ENCODE measurements at regions of chr14 and their contacts with region 1.

Region 1: GRCh38 chr14:74612350-74613021 is 449 bp upstream of the LTBP2 start:
- DNase-seq: peak; percentile 69
- H3K4me3 ChIP-seq: peak overlapping the region; percentile 65
- H3K27ac ChIP-seq: peak overlapping the region; percentile 24
- H3K4me1 ChIP-seq: peaks cover 5% of the 10 kb centered on the region
- H3K27me3 ChIP-seq: peaks cover 16% of the 10 kb centered on the region
- CTCF ChIP-seq: peak; percentile 34

Region 2: GRCh38 chr14:74362361-74362915 is 250.0 kb before region 1 on chr14:
- intact Hi-C with region 1: loop called (anchors 2 kb)
- DNase-seq: peak; percentile 75
- H3K4me3 ChIP-seq: no peak overlapping the region
- H3K27ac ChIP-seq: no peak overlapping the region
- H3K4me1 ChIP-seq: no peaks in the 10 kb centered on the region
- H3K27me3 ChIP-seq: no peaks in the 10 kb centered on the region
- CTCF ChIP-seq: peak; percentile 88

Region 3: GRCh38 chr14:74501135-74501614 is 111.3 kb before region 1 on chr14:
- intact Hi-C with region 1: loop called (anchors 5 kb)
- DNase-seq: peak; percentile 32
- H3K4me3 ChIP-seq: no peak overlapping the region
- H3K27ac ChIP-seq: no peak overlapping the region
- H3K4me1 ChIP-seq: no peaks in the 10 kb centered on the region
- H3K27me3 ChIP-seq: no peaks in the 10 kb centered on the region
- CTCF ChIP-seq: peak; percentile 17

Region 4: GRCh38 chr14:74797495-74797894 is 185.0 kb after region 1 on chr14:
- intact Hi-C with region 1: loop called (anchors 5 kb)
- DNase-seq: no peak
- H3K4me3 ChIP-seq: no peak overlapping the region
- H3K27ac ChIP-seq: no peak overlapping the region
- H3K4me1 ChIP-seq: no peaks in the 10 kb centered on the region
- H3K27me3 ChIP-seq: no peaks in the 10 kb centered on the region
- CTCF ChIP-seq: no peak

Measured in colonic mucosa (tissue), 4 donors.